A673 (cell line): ENCODE measurements at regions of chr18 and their contacts with region 1.

Region 1: GRCh38 chr18:59823596-59824195 is 76.1 kb upstream of the PMAIP1 start:
- DNase-seq: peak; percentile 80
- H3K4me3 ChIP-seq: no peak overlapping the region
- H3K27ac ChIP-seq: no peak overlapping the region
- H3K4me1 ChIP-seq: no peaks in the 10 kb centered on the region
- H3K27me3 ChIP-seq: no peaks in the 10 kb centered on the region
- CTCF ChIP-seq: peak; percentile 83

Region 2: DNA sequence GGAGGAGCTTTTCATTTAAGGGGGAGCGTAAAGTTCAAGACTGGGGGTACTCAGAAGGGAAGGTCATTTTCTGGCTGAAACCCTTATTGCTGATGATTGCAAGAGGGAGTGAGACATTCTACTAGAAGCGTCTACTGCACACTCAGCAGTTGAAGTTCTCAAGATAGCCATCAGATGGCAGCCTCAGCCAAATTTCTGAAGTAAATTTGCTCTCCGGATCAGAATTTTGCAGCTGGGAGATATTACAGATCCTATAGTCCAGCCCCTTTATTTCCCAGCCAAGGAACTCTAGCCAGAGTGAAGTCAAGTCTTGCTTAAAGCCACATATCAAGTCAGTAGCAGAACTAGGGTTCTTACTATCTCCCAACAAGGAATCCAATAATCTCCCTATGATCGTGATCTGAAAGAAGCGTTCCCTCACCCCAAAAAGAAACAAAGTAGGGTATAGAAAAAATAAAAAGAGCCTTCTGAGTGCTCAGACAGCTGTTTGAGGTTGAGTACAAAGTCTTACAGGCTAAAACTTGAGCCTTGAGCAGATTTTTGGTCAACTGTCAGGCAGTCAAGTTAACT is 574.4 kb before region 1 on chr18:
- CTCF ChIA-PET with region 1: interaction called, 4 read pairs
- POLR2A ChIA-PET with region 1: no interaction called
- intact Hi-C with region 1: loop called (anchors 5 kb)
- DNase-seq: peak; percentile 94
- H3K4me3 ChIP-seq: no peak overlapping the region
- H3K27ac ChIP-seq: peak overlapping the region; percentile 44
- H3K4me1 ChIP-seq: peaks cover 19% of the 10 kb centered on the region
- H3K27me3 ChIP-seq: no peaks in the 10 kb centered on the region
- CTCF ChIP-seq: peak; percentile 86

Region 3: GRCh38 chr18:59459369-59460079 is 364.2 kb before region 1 on chr18:
- CTCF ChIA-PET with region 1: interaction called, 31 read pairs
- POLR2A ChIA-PET with region 1: no interaction called
- intact Hi-C with region 1: loop called (anchors 2 kb)
- DNase-seq: peak; percentile 47
- H3K4me3 ChIP-seq: no peak overlapping the region
- H3K27ac ChIP-seq: no peak overlapping the region
- H3K4me1 ChIP-seq: peaks cover 5% of the 10 kb centered on the region
- H3K27me3 ChIP-seq: no peaks in the 10 kb centered on the region
- CTCF ChIP-seq: peak; percentile 69

Region 4: DNA sequence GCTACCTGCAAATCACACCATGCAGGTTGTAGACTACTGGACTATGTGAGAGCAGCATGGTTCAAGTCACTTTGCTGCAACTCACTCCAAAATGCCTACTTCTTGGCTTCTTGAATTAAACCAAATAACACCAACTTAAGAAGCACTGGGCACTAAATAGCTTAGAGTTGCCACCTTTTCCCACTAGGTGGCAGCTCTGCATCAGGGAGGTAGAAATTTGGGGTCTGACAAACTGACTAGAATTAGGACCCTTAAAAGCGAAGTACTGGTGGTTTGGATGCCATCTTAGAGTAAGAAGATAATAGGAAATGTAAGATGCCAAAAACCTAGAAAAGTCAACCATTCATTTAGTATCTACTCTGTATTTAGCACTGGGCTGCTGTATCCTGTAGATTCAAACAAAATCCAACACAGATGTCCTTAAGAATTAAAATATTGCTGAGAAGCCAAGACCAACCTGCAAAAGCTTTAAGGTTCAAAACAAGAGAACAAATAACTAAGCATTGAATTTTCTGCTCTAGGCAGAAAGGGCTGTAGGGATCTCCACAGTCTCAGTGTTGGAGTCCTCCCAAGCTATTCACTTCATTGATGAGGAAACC is 192.0 kb before region 1 on chr18:
- CTCF ChIA-PET with region 1: interaction called, 33 read pairs
- POLR2A ChIA-PET with region 1: no interaction called
- intact Hi-C with region 1: loop called (anchors 1 kb)
- DNase-seq: peak; percentile 40
- H3K4me3 ChIP-seq: no peak overlapping the region
- H3K27ac ChIP-seq: no peak overlapping the region
- H3K4me1 ChIP-seq: no peaks in the 10 kb centered on the region
- H3K27me3 ChIP-seq: peaks cover 13% of the 10 kb centered on the region
- CTCF ChIP-seq: peak; percentile 80

Region 5: GRCh38 chr18:59699750-59700534 is 123.8 kb before region 1 on chr18:
- CTCF ChIA-PET with region 1: interaction called, 9 read pairs
- POLR2A ChIA-PET with region 1: no interaction called
- intact Hi-C with region 1: loop called (anchors 2 kb)
- DNase-seq: no peak
- H3K4me3 ChIP-seq: no peak overlapping the region
- H3K27ac ChIP-seq: no peak overlapping the region
- H3K4me1 ChIP-seq: peaks cover 6% of the 10 kb centered on the region
- H3K27me3 ChIP-seq: peaks cover 35% of the 10 kb centered on the region
- CTCF ChIP-seq: no peak

Region 6: GRCh38 chr18:59783138-59783537 is 40.6 kb before region 1 on chr18:
- CTCF ChIA-PET with region 1: interaction called, 16 read pairs
- POLR2A ChIA-PET with region 1: no interaction called
- intact Hi-C with region 1: no loop called
- DNase-seq: peak; percentile 55
- H3K4me3 ChIP-seq: no peak overlapping the region
- H3K27ac ChIP-seq: no peak overlapping the region
- H3K4me1 ChIP-seq: no peaks in the 10 kb centered on the region
- H3K27me3 ChIP-seq: no peaks in the 10 kb centered on the region
- CTCF ChIP-seq: peak; percentile 72